Activated T-helper 2 cell treated with anti-CD3 and anti-CD28 coated beads, Interferon-gamma antibody, Interleukin-2, Interleukin-4, amounts not matched to agents 10 μg/mL and 5 μg/mL and 100 μg/mL, durations not matched to agents 14 hours and 24 hours and 36 hours (primary cell): ENCODE measurements at regions of chr2 and their contacts with region 1.

Region 1: GRCh38 chr2:9984217-9984739 is 32.8 kb downstream of the GRHL1 start:
- DNase-seq: no peak
- H3K4me3 Mint-ChIP-seq: no peak overlapping the region
- H3K27ac Mint-ChIP-seq: no peak overlapping the region
- H3K4me1 Mint-ChIP-seq: peaks cover 15% of the 10 kb centered on the region
- H3K27me3 Mint-ChIP-seq: peaks cover 21% of the 10 kb centered on the region

Region 2: DNA sequence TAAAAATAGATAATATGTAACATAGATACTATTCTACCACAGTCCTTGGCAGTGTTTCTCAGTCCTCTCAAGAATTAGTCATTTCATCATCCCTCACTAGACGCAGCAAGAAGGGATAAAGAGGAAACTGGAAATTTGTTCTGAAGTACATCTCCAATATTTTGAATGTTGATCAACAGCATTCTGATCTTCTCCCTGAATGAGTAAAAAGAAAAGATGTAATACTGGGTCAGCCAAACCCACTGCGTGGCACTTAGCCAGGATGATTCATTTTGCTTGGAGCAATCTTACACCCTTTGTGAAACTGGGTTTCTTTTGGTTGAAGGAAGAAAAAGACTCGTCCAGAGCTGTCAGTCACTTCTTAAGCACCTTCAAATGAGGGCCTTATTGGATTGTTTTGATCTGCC is 86.9 kb before region 1 on chr2:
- intact Hi-C with region 1: loop called (anchors 5 kb)
- DNase-seq: no peak
- H3K4me3 Mint-ChIP-seq: no peak overlapping the region
- H3K27ac Mint-ChIP-seq: peak overlapping the region; percentile 48
- H3K4me1 Mint-ChIP-seq: peaks cover 25% of the 10 kb centered on the region
- H3K27me3 Mint-ChIP-seq: no peaks in the 10 kb centered on the region

Region 3: GRCh38 chr2:10043906-10044601 is 59.8 kb after region 1 on chr2:
- intact Hi-C with region 1: loop called (anchors 1 kb)
- DNase-seq: peak; percentile 88
- H3K4me3 Mint-ChIP-seq: peak overlapping the region; percentile 71
- H3K27ac Mint-ChIP-seq: peak overlapping the region; percentile 60
- H3K4me1 Mint-ChIP-seq: peaks cover 16% of the 10 kb centered on the region
- H3K27me3 Mint-ChIP-seq: peaks cover 16% of the 10 kb centered on the region